ENCODE measurements at regions of chr20 and their contacts with region 1.

Region 1: GRCh38 chr20:3716195-3716834 is 3.9 kb upstream of the SIGLEC1 start:
- DNase-seq: peak; percentile 72
- H3K4me3 ChIP-seq: no peak overlapping the region
- H3K27ac ChIP-seq: no peak overlapping the region
- H3K4me1 ChIP-seq: no peaks in the 10 kb centered on the region
- H3K27me3 ChIP-seq: peaks cover 4% of the 10 kb centered on the region
- CTCF ChIP-seq: peak; percentile 88

Region 2: DNA sequence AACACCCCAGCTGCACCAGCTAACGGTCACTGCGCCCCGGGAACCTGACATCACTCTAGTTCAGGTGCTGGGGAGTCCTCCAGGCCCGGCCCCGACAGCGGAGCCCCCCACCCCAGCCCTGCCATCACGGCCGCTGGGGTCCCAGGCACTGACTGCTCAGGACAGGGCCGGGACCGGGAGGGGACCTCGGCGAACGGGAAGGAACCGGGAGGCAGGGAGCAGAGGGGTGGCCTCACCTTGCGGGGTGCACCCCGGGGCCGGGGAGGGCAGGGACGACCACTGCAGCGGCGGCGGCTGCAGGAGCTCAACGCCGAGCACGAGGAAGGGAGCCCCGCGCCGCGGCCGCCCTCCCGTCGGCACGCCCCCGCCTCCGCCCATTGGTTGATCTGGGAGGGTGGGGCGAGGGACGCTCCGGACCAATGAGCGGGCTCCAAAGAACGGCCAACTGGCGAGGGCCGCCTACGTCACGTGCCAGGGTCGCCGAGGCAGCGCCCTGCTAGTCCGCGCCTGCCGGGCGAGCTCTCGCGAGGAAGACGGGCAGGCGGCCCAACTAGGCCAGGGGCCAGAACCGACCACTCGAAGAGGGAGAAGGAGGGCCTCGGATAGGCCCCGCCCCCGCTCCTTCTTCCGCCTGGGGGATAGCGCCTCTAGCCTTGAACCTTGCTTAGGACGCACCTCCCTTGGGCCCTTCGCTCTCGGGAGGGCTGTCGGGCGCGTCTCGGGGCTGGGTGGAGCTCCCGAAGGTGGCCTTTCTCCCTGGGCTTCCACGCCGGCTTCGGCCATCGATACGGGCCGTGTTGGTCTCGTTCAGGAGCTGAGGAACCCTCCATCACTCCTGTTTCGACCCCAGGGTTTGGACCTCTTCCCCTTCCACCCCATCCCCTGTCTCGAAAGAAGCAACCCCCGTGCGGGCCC is 51.4 kb after region 1 on chr20 and contains the start of gene ADISSP:
- CTCF ChIA-PET with region 1: interaction called, 4 read pairs
- POLR2A ChIA-PET with region 1: no interaction called
- intact Hi-C with region 1: loop called (anchors 5 kb)
- DNase-seq: peak; percentile 99
- H3K4me3 ChIP-seq: peak within 1 kb of the TSS; percentile 82
- H3K27ac ChIP-seq: peak within 1 kb of the TSS; percentile 70
- H3K4me1 ChIP-seq: peaks cover 18% of the 10 kb centered on the region
- H3K27me3 ChIP-seq: no peaks in the 10 kb centered on the region
- CTCF ChIP-seq: peak; percentile 24; the same call in 1 of the 2 replicates
- total RNA-seq, gene ADISSP: 75.7 and 80.3 TPM in 2 replicates